ENCODE measurements at regions of chr2 and their contacts with region 1.

Region 1: GRCh38 chr2:131492418-131493198 is 411 bp upstream of the MZT2A start:
- DNase-seq: peak; percentile 97
- ATAC-seq: peak; percentile 72
- H3K4me3 ChIP-seq: peak overlapping the region; percentile 97
- H3K27ac ChIP-seq: peak overlapping the region; percentile 76
- H3K4me1 ChIP-seq: 0 out of 2 replicates have a peak, but pooled peaks cover 8% of the 10 kb centered on the region
- H3K27me3 ChIP-seq: no peaks in the 10 kb centered on the region
- CTCF ChIP-seq: peak; percentile 75

Region 2: GRCh38 chr2:131105156-131105949 is 387.3 kb before region 1 on chr2 and contains the start of gene PLEKHB2:
- CTCF ChIA-PET with region 1: no interaction called
- POLR2A ChIA-PET with region 1: no interaction called
- intact Hi-C with region 1: loop called (anchors 5 kb)
- DNase-seq: peak; percentile 91
- ATAC-seq: peak; percentile 71
- H3K4me3 ChIP-seq: peak within 1 kb of the TSS; percentile 99
- H3K27ac ChIP-seq: peak within 1 kb of the TSS; percentile 75
- H3K4me1 ChIP-seq: peaks cover 20% of the 10 kb centered on the region
- H3K27me3 ChIP-seq: no peaks in the 10 kb centered on the region
- CTCF ChIP-seq: no peak
- total RNA-seq, gene PLEKHB2: 64.5 and 73.9 TPM in 2 replicates

Region 3: DNA sequence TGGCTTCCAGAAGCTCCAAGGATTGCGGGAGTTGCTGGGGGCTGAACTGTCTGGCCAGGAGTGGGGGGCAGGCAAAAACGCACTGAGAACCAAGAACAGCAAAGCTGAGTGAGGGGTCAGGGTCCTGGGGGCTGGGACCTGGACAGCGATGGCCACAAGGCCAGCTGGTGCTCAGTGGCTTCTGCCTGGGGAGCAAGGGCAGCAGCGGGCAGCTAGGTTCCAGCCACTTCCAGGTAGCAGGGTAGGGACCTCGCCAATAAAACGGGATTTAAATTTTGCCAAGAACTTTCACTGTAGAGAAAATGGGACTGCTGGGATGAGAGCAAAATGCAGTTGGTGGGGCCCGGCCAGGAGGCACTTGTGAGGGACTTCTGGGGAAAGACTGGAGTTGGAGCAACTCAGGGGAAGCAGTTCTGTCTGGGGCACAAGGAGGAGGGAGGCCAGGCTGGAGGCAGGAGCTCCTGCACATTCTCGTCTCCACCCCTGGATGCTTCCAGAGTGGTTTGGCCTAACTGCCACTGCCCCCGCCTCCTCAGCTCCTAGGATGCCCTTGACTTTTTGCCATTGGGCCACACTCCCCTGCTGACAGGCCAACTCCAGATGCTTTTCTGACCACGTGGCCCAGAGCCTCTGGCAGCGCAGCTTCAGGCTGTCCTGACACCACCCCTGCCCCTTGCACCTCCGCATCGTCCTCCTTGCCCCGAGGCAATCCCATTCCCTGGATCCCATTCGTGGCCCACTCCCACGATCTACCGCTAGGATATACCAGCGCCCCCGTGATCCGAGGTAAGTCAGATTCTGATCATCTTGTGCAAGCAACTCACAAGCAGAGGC is 29.6 kb after region 1 on chr2:
- CTCF ChIA-PET with region 1: no interaction called
- POLR2A ChIA-PET with region 1: no interaction called
- intact Hi-C with region 1: loop called (anchors 5 kb)
- DNase-seq: no peak
- ATAC-seq: no peak
- H3K4me3 ChIP-seq: no peak overlapping the region
- H3K27ac ChIP-seq: no peak overlapping the region
- H3K4me1 ChIP-seq: no peaks in the 10 kb centered on the region
- H3K27me3 ChIP-seq: no peaks in the 10 kb centered on the region
- CTCF ChIP-seq: no peak

Measured in PC-3 (cell line).